ENCODE measurements at regions of chr10 and their contacts with region 1.

Region 1: DNA sequence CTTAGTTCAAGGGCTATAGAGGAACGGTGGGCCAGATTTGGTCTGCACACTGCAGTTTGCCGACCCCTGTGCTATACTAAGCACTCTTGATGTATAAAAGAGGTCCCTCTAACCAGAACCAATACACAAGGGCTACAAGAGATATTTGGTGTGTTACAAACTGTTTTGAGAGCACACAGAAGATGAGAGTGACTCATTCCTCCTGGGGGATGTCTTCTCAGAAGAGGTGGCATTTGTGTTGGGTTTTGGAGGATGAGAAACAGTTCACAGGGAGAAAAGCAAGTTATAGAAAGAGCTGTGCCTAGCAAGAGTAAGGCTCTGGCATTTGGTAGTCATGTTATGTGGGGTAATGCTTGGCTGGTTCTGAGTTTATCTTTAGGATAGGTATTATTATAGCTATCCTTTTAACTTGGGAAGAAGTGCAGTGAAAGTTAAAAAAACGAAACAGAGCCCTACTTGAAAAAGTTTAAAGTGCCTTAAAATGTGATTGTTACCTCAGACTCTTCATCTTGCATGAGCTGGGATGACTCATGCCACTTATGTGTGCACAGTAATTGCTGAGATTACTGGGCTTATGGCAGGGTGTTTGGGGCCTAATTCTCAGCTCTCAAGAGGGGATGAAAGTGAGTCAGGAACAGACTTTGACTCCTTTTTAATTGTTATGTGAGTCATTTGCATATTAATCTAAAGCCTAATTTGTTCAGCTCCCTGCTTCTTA is 160.4 kb downstream of the KIF20B start:
- DNase-seq: peak; percentile 64
- H3K4me3 Mint-ChIP-seq: peak overlapping the region; percentile 35
- H3K27ac Mint-ChIP-seq: peak overlapping the region; percentile 72
- H3K4me1 Mint-ChIP-seq: peaks cover 17% of the 10 kb centered on the region
- H3K27me3 Mint-ChIP-seq: peaks cover 6% of the 10 kb centered on the region

Region 2: DNA sequence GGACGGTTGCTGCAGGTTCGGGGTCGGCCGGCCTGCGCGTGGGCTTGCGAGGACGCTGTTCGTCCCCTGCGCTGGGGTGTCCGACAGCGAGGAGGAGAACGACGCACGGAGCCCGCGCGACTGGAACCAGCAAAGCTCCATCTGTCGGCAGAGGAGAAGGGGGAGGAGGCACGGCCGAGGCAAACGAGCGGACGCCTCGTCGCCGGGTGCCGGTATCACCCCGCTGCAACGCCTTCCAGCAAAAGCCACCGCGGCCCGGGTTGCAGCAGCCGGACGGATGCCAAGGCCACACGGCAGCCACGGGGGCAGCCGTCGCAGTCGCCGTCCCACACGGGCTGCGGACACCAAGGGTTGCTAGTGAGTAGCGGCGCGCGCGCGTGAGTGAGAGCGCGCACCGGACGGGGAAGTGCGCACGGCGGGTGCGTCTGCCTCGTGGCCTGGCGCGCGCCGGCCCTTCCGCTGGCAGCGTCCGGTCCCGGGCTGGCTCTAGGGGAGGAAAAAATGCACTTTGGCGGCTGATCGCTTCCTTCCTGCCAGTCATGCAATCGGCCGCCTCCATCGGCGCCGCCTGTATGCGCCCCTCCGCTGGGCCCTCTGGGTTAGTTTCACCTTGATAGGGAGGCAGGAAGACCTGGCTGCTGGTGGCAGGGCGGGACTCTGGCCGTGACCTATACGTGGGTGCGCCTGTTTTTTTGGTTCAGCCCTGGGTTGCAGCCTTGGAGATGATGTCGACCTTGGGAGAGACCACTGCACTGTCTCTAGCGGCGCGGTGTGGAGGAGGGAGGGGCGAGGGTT is 981.3 kb before region 1 on chr10:
- intact Hi-C with region 1: loop called (anchors 5 kb)
- DNase-seq: peak; percentile 92
- H3K4me3 Mint-ChIP-seq: peak overlapping the region; percentile 96
- H3K27ac Mint-ChIP-seq: peak overlapping the region; percentile 99
- H3K4me1 Mint-ChIP-seq: peaks cover 59% of the 10 kb centered on the region
- H3K27me3 Mint-ChIP-seq: no peaks in the 10 kb centered on the region

Region 3: GRCh38 chr10:89643431-89644331 is 218.1 kb before region 1 on chr10:
- intact Hi-C with region 1: loop called (anchors 1 kb)
- DNase-seq: peak; percentile 93
- H3K4me3 Mint-ChIP-seq: no peak overlapping the region
- H3K27ac Mint-ChIP-seq: no peak overlapping the region
- H3K4me1 Mint-ChIP-seq: peaks cover 10% of the 10 kb centered on the region
- H3K27me3 Mint-ChIP-seq: peaks cover 17% of the 10 kb centered on the region

Region 4: GRCh38 chr10:89701238-89702120 is 160.3 kb before region 1 on chr10 and contains the start of gene KIF20B:
- intact Hi-C with region 1: loop called (anchors 5 kb)
- DNase-seq: peak; percentile 99
- H3K4me3 Mint-ChIP-seq: peak within 1 kb of the TSS; percentile 95
- H3K27ac Mint-ChIP-seq: peak within 1 kb of the TSS; percentile 98
- H3K4me1 Mint-ChIP-seq: peaks cover 42% of the 10 kb centered on the region
- H3K27me3 Mint-ChIP-seq: no peaks in the 10 kb centered on the region
- total RNA-seq, gene KIF20B: 55.0 and 55.6 TPM in 2 replicates

Region 5: GRCh38 chr10:89805599-89806013 is 56.1 kb before region 1 on chr10:
- intact Hi-C with region 1: loop called (anchors 1 kb)
- DNase-seq: peak; percentile 65
- H3K4me3 Mint-ChIP-seq: no peak overlapping the region
- H3K27ac Mint-ChIP-seq: peak overlapping the region; percentile 27
- H3K4me1 Mint-ChIP-seq: peaks cover 21% of the 10 kb centered on the region
- H3K27me3 Mint-ChIP-seq: peaks cover 22% of the 10 kb centered on the region

Region 6: GRCh38 chr10:90087197-90088007 is 225.7 kb after region 1 on chr10:
- intact Hi-C with region 1: loop called (anchors 10 kb)
- DNase-seq: no peak
- H3K4me3 Mint-ChIP-seq: no peak overlapping the region
- H3K27ac Mint-ChIP-seq: no peak overlapping the region
- H3K4me1 Mint-ChIP-seq: peaks cover 6% of the 10 kb centered on the region
- H3K27me3 Mint-ChIP-seq: peaks cover 1% of the 10 kb centered on the region